Calu3 (cell line): ENCODE measurements at regions of chr1 and their contacts with region 1.

Region 1: GRCh38 chr1:178189814-178190213 is 95.9 kb downstream of the RASAL2 start:
- DNase-seq: peak; percentile 60
- H3K4me3 Mint-ChIP-seq: no peak overlapping the region
- H3K27ac Mint-ChIP-seq: no peak overlapping the region
- H3K4me1 Mint-ChIP-seq: peaks cover 42% of the 10 kb centered on the region
- H3K27me3 Mint-ChIP-seq: no peaks in the 10 kb centered on the region
- CTCF ChIP-seq: peak; percentile 41

Region 2: GRCh38 chr1:177959811-177960515 is 229.9 kb before region 1 on chr1:
- CTCF ChIA-PET with region 1: no interaction called
- intact Hi-C with region 1: loop called (anchors 10 kb)
- DNase-seq: peak; percentile 13
- H3K4me3 Mint-ChIP-seq: no peak overlapping the region
- H3K27ac Mint-ChIP-seq: no peak overlapping the region
- H3K4me1 Mint-ChIP-seq: peaks cover 6% of the 10 kb centered on the region
- H3K27me3 Mint-ChIP-seq: no peaks in the 10 kb centered on the region
- CTCF ChIP-seq: peak; percentile 40

Region 3: GRCh38 chr1:178031856-178032320 is 157.9 kb before region 1 on chr1:
- CTCF ChIA-PET with region 1: interaction called, 7 read pairs
- intact Hi-C with region 1: loop called (anchors 2 kb)
- DNase-seq: peak; percentile 92
- H3K4me3 Mint-ChIP-seq: no peak overlapping the region
- H3K27ac Mint-ChIP-seq: no peak overlapping the region
- H3K4me1 Mint-ChIP-seq: peaks cover 15% of the 10 kb centered on the region
- H3K27me3 Mint-ChIP-seq: no peaks in the 10 kb centered on the region
- CTCF ChIP-seq: peak; percentile 85

Region 4: DNA sequence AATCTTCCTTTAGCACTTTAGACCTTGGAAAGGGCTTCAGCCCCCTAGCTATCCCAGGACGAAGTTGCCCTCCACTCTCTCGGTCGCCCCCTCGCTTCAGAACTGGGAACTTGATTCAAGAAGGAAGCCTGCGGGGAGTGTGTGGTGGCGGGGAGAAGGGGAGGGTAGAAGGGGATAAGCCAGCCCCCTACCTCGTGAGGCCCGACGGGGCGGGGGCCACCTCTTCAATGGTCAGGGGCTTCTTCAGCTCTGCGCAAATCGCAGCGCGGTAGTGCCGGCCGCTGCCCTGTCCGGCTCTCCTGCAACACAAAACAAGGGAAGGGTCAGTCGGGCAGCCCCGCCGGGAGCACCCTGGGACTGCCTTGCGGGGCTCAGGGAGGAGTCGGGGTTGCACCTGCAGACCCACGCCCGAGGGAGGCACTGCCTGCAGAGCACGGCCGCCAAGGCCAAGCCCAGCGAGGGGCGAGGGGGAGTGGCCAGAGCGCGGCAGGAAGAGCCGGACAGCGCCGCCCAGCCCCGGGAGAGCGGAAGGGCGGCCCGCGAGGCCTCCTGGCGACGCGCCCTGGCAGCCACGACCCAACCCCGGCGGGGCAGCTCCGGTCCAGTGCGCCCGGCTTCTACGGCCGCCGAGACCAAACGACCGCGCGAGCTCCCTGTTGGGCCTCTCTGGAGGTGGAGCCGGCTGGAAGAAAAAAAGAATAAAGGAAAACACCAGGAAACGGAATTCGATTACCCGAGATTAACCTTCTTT is 152.1 kb before region 1 on chr1:
- CTCF ChIA-PET with region 1: interaction called, 3 read pairs
- intact Hi-C with region 1: loop called (anchors 2 kb)
- DNase-seq: peak; percentile 94
- H3K4me3 Mint-ChIP-seq: peak overlapping the region; percentile 82
- H3K27ac Mint-ChIP-seq: peak overlapping the region; percentile 30
- H3K4me1 Mint-ChIP-seq: peaks cover 34% of the 10 kb centered on the region
- H3K27me3 Mint-ChIP-seq: no peaks in the 10 kb centered on the region
- CTCF ChIP-seq: peak; percentile 90

Region 5: DNA sequence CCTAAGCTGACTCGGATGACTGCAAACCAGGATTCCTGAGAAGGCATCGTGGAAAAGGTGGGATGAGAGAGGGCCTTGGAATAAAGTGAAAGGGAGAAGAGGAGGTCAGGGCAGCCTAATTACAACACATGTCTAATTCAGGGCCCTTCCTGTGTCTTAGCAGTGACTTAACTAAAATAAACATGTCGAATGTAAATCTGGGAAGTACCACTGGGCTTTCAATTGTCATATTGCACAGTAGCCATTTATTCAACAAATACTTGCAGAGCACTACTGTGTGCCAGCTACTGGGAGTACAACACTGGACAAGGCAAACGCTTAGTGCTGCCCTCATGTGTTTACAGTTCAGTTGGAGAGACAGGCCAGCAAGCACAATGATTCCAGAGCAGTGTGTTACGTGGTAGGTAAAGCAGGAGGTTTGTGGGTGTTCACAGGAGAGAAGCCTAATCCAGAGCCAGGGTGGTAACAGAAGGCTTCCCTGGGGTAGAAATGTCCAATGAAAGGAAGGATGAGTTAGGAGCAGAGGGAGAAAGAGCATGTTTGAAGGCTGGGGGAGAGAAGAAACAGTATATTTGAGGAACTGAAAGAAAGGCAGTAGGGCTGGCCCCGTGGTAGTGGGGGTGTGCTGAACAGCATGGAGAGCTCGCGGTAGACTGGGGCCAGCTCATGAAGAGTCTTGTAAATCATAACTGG is 133.9 kb before region 1 on chr1:
- CTCF ChIA-PET with region 1: interaction called, 3 read pairs
- intact Hi-C with region 1: loop called (anchors 2 kb)
- DNase-seq: peak; percentile 39
- H3K4me3 Mint-ChIP-seq: no peak overlapping the region
- H3K27ac Mint-ChIP-seq: no peak overlapping the region
- H3K4me1 Mint-ChIP-seq: peaks cover 61% of the 10 kb centered on the region
- H3K27me3 Mint-ChIP-seq: no peaks in the 10 kb centered on the region
- CTCF ChIP-seq: no peak

Region 6: DNA sequence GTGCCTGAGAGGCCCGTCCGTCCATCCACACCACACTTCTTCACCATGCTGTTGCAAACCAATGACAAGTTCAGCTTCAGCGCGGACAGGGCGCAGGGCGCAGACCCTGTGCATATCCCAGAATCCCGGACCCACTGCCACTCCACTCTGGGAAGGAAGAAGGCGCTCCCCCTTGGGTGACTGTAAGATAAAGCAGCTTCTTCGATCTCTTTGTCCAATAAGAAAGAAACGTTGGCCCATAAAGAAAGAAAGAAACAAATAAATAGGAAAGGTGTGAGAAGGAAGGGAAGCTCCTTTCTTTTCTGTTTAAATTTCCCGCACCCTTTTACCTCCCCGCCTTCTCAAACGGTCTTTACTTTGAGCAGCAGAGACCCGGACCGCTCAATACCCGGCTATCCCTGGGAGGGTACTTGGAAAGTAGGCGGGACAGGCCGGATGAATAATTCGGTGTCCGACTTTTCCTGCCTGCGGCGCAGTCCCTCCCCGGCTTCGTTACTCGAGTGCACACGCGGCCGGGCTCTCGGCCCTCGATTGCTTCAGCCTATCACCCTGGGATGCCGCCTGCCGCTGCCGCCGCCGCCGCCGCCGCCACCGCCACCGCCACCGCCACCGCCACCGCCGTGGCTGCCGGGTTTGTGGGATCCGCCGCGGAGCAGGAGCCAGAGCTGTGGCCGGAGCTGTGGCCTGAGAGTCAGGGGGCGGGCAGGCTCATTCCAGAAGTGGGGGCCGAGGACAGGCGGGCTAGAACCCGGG is 96.4 kb before region 1 on chr1:
- CTCF ChIA-PET with region 1: no interaction called
- intact Hi-C with region 1: loop called (anchors 2 kb)
- DNase-seq: peak; percentile 96
- H3K4me3 Mint-ChIP-seq: peak overlapping the region; percentile 95
- H3K27ac Mint-ChIP-seq: peak overlapping the region; percentile 82
- H3K4me1 Mint-ChIP-seq: peaks cover 19% of the 10 kb centered on the region
- H3K27me3 Mint-ChIP-seq: no peaks in the 10 kb centered on the region
- CTCF ChIP-seq: no peak

Region 7: DNA sequence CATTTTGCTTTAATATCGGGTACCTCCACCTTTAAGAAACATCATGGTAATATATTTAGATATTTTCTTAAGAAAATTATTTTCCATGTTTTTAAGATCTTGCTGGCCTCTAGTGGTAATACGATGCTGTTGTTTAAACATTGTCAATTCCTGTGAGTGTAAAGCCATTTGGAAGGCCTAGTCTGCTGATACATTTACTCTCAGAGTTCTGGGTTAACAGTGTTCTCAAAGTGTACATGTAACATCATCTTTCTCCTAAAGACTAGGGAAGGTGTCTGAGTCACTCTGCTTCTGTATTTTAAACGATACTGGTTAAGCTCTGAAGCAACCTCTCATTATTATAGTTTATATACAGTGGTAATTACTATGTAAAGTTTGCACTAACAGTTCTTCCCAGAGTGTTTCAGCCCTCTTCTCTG is 93.1 kb after region 1 on chr1:
- CTCF ChIA-PET with region 1: interaction called, 3 read pairs
- intact Hi-C with region 1: loop called (anchors 2 kb)
- DNase-seq: no peak
- H3K4me3 Mint-ChIP-seq: no peak overlapping the region
- H3K27ac Mint-ChIP-seq: no peak overlapping the region
- H3K4me1 Mint-ChIP-seq: peaks cover 39% of the 10 kb centered on the region
- H3K27me3 Mint-ChIP-seq: no peaks in the 10 kb centered on the region
- CTCF ChIP-seq: no peak